HEK293T (cell line): ENCODE measurements at regions of chr7 and their contacts with region 1.

Region 1: GRCh38 chr7:23055582-23056178 is 41.8 kb upstream of the HYCC1 start:
- DNase-seq: peak; percentile 65

Region 2: DNA sequence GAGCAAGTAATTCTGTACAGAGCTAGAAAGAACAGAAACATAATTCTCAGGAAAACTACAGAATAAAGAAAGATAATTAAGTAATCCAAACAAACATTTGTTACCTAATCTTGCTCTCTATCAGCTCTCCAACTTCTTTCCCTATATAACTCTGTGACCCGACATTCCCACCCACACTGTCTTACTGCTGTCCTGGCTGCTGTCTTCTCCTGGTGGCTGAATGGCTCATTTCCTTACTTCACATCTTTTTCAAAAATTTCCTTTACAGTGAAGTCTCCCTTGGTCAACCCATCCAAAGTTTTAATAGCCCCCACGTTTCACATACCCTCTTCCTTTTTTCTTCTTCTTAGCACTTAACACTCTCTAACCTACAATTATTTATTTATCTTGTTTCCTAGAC is 105.7 kb before region 1 on chr7:
- CTCF ChIA-PET with region 1: interaction called, 11 read pairs
- POLR2A ChIA-PET with region 1: no interaction called
- DNase-seq: peak; percentile 14

Region 3: DNA sequence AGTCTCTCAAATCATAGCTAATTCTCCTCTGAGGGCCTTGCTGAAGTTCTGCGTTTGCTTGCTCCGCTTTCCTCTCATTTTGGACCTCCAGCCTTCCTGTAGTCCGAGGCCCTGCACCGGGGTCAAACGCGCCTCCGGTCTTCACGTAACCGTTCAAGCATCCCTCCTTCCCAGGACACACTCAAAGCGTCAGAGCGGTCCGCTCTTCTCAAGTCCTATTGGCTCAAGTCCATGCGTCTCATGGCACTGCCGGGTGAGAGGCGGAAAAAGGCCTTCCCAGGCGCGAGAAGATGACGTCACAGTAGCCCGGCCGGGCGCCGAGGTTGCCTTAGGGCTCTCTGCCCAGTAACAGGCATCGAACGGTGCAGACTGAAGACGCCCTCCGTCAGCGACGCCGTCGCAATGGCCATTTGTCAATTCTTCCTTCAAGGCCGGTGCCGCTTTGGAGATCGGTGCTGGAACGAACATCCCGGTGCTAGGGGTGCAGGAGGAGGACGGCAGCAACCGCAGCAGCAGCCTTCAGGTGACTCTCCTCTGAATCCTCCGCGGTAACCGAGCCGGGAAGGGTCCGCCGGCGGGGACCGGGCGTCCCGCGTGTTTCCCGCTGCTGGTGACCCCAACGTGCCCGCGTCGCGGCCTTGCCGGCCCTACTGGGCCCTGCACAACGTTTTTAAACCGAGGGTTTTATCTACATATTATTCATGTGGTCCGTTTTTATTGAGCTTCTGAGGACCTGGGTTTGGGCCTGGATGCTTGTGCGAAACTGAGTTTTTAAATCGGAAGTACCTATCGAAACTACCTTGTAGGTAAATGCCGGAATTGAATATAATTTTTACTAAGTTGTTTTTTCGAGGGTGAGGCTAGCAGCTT is 126.2 kb after region 1 on chr7 and contains the start of gene NUP42:
- CTCF ChIA-PET with region 1: no interaction called
- POLR2A ChIA-PET with region 1: no interaction called
- DNase-seq: peak; percentile 95